CD8-positive, alpha-beta memory T cell (primary cell): ENCODE measurements at regions of chr3 and their contacts with region 1.

Region 1: GRCh38 chr3:59469948-59470723 is 420.3 kb upstream of the CFAP20DC start:
- DNase-seq: no peak
- H3K4me3 ChIP-seq: peak overlapping the region; percentile 19
- H3K4me3 Mint-ChIP-seq: peak overlapping the region in 2 of 7 donors; percentile 1 to 9
- H3K27ac ChIP-seq: no peak overlapping the region
- H3K27ac Mint-ChIP-seq: peak overlapping the region in 6 of 8 donors; percentile 5 to 59 (median 32)
- H3K4me1 ChIP-seq: peaks cover 9% of the 10 kb centered on the region
- H3K4me1 Mint-ChIP-seq: peaks cover 14 to 18% (median 16%) of the 10 kb centered on the region in 3 donors
- H3K27me3 ChIP-seq: no peaks in the 10 kb centered on the region
- H3K27me3 Mint-ChIP-seq: no peaks in the 10 kb centered on the region

Region 2: DNA sequence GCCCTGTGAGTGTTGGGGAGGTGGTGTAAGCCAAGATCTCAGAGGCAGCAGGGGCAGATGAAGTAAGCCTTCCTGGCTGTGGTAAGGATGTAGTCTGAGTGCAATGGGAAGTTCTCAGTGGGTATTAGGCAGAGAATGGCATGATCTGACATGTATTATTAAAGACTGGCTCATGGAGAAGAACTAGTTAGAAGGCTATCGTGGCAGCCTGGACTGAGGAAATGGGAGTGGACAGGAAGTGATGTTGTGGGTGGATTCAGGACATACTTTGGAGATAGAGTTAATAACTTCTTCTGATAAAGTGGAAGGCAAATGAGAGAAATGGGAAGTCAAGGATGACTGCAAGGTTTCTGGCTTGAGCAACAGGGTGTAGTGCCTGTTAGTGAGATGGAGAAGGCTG is 169.4 kb before region 1 on chr3:
- CTCF ChIA-PET with region 1: no interaction called
- POLR2A ChIA-PET with region 1: interaction called, 16 read pairs
- DNase-seq: no peak
- H3K4me3 ChIP-seq: no peak overlapping the region
- H3K4me3 Mint-ChIP-seq: no peak overlapping the region
- H3K27ac ChIP-seq: no peak overlapping the region
- H3K27ac Mint-ChIP-seq: no peak overlapping the region
- H3K4me1 ChIP-seq: no peaks in the 10 kb centered on the region
- H3K4me1 Mint-ChIP-seq: peaks cover 0 to 2% (median 0%) of the 10 kb centered on the region in 3 donors
- H3K27me3 ChIP-seq: no peaks in the 10 kb centered on the region
- H3K27me3 Mint-ChIP-seq: peaks cover 0 to 1% of the 10 kb centered on the region in 2 donors

Region 3: DNA sequence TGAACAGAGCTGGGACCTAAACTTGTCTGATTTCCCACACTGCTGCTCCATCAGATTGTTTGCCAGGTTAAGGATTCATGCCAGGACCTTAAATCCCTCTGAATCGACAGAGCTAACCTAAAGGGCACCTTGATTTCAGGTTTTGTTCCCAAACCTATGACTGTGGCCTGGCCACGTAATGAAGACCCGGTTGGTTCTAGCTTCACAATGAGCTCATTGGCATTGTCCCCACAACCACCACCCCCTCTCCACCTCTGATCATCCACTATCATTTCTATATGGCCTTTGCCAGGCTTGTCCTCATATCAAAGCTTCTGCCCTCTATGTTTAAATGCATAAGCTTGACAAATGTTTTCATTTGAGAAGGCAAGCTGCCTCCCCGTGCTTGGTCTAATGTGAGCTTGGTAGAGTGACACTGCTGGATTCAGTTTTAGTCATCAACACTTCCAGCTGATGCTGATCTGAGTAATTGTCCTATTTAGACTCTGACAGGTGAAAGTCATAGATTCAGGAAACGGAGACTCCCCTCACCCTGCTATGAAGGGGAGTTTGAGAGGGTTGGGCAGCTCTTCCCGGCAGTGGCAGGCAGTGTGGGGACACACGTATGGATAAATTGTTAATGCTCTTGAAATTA is 13.2 kb before region 1 on chr3:
- CTCF ChIA-PET with region 1: no interaction called
- POLR2A ChIA-PET with region 1: no interaction called
- DNase-seq: no peak
- H3K4me3 ChIP-seq: no peak overlapping the region
- H3K4me3 Mint-ChIP-seq: no peak overlapping the region
- H3K27ac ChIP-seq: no peak overlapping the region
- H3K27ac Mint-ChIP-seq: peak overlapping the region in 2 of 8 donors; percentile 12 to 36
- H3K4me1 ChIP-seq: peaks cover 26% of the 10 kb centered on the region
- H3K4me1 Mint-ChIP-seq: peaks cover 28 to 37% (median 35%) of the 10 kb centered on the region in 3 donors
- H3K27me3 ChIP-seq: no peaks in the 10 kb centered on the region
- H3K27me3 Mint-ChIP-seq: peaks cover 0 to 2% of the 10 kb centered on the region in 2 donors

Region 4: DNA sequence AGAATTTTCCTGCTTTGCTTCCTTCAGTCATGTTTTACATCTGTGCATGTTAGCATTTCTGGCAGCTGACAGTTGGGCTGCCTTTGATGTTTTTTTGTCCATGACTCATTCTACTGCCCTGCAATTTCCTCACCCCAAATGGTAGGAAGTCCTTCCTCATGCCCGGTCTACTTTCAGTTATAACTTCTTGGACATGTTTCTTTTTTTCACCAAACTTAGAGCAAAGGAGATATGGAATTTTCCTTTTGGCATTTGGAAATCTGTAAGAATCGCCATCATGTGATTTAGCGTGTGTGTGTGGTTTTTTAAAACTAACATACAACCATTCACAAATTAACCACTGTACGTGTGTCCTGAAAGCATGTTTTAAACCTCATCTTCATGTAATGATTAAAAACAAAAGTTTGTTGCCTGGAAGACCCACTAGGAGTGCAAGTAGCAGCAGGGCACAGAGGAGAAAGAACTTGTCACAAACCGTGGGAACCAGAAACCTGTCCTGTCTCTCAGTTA is 10.4 kb after region 1 on chr3:
- CTCF ChIA-PET with region 1: no interaction called
- POLR2A ChIA-PET with region 1: interaction called, 10 read pairs
- DNase-seq: no peak
- H3K4me3 ChIP-seq: no peak overlapping the region
- H3K4me3 Mint-ChIP-seq: peak overlapping the region; percentile 13 to 75 (median 66)
- H3K27ac ChIP-seq: no peak overlapping the region
- H3K27ac Mint-ChIP-seq: peak overlapping the region in 5 of 8 donors; percentile 0 to 88 (median 11)
- H3K4me1 ChIP-seq: peaks cover 5% of the 10 kb centered on the region
- H3K4me1 Mint-ChIP-seq: peaks cover 15 to 17% (median 15%) of the 10 kb centered on the region in 3 donors
- H3K27me3 ChIP-seq: no peaks in the 10 kb centered on the region
- H3K27me3 Mint-ChIP-seq: peaks cover 0 to 3% of the 10 kb centered on the region in 2 donors